WTC11 (cell line): ENCODE measurements at regions of chr12 and their contacts with region 1.

Region 1: GRCh38 chr12:65121049-65121955 is at the start of gene WIF1:
- DNase-seq: peak; percentile 76
- ATAC-seq: peak; percentile 86
- H3K4me3 Mint-ChIP-seq: peak within 1 kb of the TSS; percentile 55
- H3K27ac Mint-ChIP-seq: no peak within 1 kb of the TSS
- H3K4me1 Mint-ChIP-seq: peaks cover 5% of the 10 kb centered on the region; the same call in 1 of the 2 replicates
- H3K27me3 Mint-ChIP-seq: peaks cover 52% of the 10 kb centered on the region
- CTCF ChIP-seq: peak; percentile 88
- total RNA-seq, gene WIF1: 0.69 to 1.8 TPM (median 1.5 TPM) in 3 replicates

Region 2: DNA sequence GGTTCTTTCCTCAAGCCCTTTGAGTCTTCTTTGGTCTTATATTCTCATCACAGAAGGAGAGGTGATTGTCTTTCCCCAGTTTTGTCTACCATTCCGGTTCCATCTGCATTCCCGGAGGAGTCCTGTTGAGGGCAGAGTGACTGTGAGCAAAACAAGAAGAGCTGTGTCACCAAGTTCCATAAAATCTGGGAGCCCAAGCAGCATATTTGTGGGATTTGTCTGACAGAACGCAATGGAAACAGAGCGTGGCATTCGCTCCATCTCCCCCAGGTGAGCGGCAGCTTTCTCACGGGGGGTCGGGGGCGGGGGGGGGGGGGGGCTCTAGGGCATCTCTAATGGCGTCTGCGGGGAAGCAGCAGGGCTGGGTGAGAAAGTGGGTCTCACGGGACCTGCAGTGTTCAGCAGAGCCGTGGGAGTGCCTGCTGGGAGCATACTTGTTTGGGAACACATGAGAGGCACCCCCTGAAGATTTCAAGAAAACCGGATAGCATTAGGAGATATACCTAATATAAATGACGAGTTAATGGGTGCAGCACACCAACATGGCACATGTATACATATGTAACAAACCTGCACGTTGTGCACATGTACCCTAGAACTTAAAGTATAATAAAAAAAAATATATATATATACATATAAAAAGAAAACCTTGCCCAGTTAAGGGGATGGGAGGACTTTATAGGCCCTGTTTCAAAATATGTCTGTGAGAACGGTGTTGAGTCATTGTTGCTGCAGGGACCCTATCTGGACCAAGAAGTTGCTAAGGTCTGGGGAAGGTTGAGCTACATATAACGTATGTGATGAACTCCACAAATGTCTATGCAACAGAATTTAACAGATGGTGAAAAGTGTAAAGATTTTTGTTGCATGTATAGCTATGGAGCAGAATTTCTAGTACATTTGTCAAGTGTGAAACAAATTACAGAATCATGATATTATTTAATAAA is 237.4 kb before region 1 on chr12:
- CTCF ChIA-PET with region 1: interaction called, 17 read pairs
- POLR2A ChIA-PET with region 1: no interaction called
- DNase-seq: no peak
- ATAC-seq: peak; percentile 88
- H3K4me3 Mint-ChIP-seq: no peak overlapping the region
- H3K27ac Mint-ChIP-seq: 0 out of 2 replicates have a peak overlapping the region, but pooled peaks have one; percentile 8
- H3K4me1 Mint-ChIP-seq: peaks cover 11% of the 10 kb centered on the region
- H3K27me3 Mint-ChIP-seq: peaks cover 36% of the 10 kb centered on the region
- CTCF ChIP-seq: no peak

Region 3: GRCh38 chr12:64955746-64956145 is 165.6 kb before region 1 on chr12:
- CTCF ChIA-PET with region 1: no interaction called
- POLR2A ChIA-PET with region 1: no interaction called
- DNase-seq: no peak
- ATAC-seq: no peak
- H3K4me3 Mint-ChIP-seq: no peak overlapping the region
- H3K27ac Mint-ChIP-seq: no peak overlapping the region
- H3K4me1 Mint-ChIP-seq: peaks cover 20% of the 10 kb centered on the region
- H3K27me3 Mint-ChIP-seq: no peaks in the 10 kb centered on the region; the same call in 1 of the 2 replicates
- CTCF ChIP-seq: no peak

Region 4: DNA sequence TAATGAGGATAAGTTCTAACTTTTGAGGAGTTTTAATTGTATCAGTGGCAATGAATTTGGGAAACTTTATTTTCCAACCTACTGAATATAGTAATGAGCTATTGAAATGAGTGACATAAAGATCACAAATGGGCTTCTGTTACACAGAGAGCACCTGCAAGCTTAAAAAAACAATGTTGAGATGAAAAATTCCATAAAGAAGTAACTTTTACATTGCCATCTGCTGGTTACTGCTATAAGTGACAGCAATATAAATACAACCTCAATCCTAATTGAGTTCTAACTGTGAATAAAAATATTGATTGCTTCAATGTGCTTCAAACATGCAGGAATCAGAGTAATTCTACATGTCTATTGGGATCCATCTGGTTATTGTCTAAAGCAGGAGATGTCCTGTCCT is 14.4 kb before region 1 on chr12:
- CTCF ChIA-PET with region 1: interaction called, 13 read pairs
- POLR2A ChIA-PET with region 1: no interaction called
- DNase-seq: no peak
- ATAC-seq: no peak
- H3K4me3 Mint-ChIP-seq: no peak overlapping the region
- H3K27ac Mint-ChIP-seq: no peak overlapping the region
- H3K4me1 Mint-ChIP-seq: peaks cover 9% of the 10 kb centered on the region
- H3K27me3 Mint-ChIP-seq: peaks cover 2% of the 10 kb centered on the region; the same call in 1 of the 2 replicates
- CTCF ChIP-seq: no peak

Region 5: GRCh38 chr12:65232476-65233077 is 111.3 kb after region 1 on chr12:
- CTCF ChIA-PET with region 1: no interaction called
- POLR2A ChIA-PET with region 1: no interaction called
- DNase-seq: no peak
- ATAC-seq: no peak
- H3K4me3 Mint-ChIP-seq: no peak overlapping the region
- H3K27ac Mint-ChIP-seq: no peak overlapping the region
- H3K4me1 Mint-ChIP-seq: peaks cover 5% of the 10 kb centered on the region
- H3K27me3 Mint-ChIP-seq: no peaks in the 10 kb centered on the region
- CTCF ChIP-seq: no peak

Region 6: GRCh38 chr12:65720136-65721130 is 599.1 kb after region 1 on chr12:
- CTCF ChIA-PET with region 1: no interaction called
- POLR2A ChIA-PET with region 1: no interaction called
- DNase-seq: no peak
- ATAC-seq: no peak
- H3K4me3 Mint-ChIP-seq: no peak overlapping the region
- H3K27ac Mint-ChIP-seq: no peak overlapping the region
- H3K4me1 Mint-ChIP-seq: peaks cover 27% of the 10 kb centered on the region
- H3K27me3 Mint-ChIP-seq: no peaks in the 10 kb centered on the region; the same call in 1 of the 2 replicates
- CTCF ChIP-seq: no peak